ENCODE measurements at regions of chr4 and their contacts with region 1.

Region 1: DNA sequence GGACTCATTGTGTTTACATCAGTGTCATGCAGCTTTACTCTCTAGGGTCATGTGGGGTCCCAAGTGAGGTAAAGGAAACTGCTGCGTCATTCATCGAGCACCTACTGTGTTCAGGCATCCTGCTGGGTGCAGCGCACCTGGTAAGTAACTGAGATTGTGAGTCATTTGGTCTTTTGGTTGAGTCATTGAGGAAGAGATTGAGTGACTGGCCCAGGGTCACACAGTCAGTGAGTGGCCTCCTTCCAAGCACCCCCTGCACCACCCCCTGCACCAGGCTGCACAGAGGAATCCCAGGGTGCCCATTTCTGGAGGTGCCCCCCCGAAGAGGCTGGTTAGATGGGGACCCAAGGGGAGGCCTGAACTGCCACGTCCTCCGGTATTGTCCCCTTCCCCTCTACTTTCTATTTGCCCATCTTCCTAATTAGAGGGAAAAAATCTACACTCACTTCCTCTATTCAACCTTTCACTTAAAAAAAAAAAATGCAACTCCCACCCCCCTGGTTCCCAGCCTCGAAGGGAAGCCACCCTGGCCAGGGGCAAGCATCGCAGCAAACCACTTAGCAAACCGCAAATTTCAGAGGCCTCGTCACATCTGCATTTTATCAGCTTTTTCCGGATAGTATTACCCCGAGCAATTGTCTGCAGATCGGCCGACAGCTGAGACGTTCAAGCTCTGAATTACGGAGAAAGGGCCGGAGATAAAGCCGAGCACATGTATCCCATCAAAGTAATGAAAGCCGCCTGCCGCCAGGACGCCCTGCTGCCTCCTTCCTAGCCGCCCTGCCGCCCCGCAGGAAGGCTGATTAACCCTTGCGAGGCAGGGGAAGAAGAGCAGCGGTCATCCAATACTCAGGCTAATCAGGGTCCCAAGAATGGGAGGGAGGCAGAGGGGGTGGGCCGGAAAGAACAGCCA is 96.3 kb upstream of the MSX1 start:
- DNase-seq: peak in 1 of 2 experiments; percentile 63
- H3K4me3 ChIP-seq: peak overlapping the region in 1 of 4 experiments; percentile 17; a peak in 3 of 8 replicates
- H3K27ac ChIP-seq: no peak overlapping the region
- H3K4me1 ChIP-seq: peaks cover 3 to 27% (median 20%) of the 10 kb centered on the region in 4 experiments
- H3K27me3 ChIP-seq: peaks cover 0 to 26% (median 12%) of the 10 kb centered on the region in 4 experiments; a peak in 5 of 7 replicates
- CTCF ChIP-seq: 0 out of 4 replicates have a peak, but pooled peaks of 1 of the 3 experiments have one; percentile 4
- EP300 ChIP-seq: no peak
- POLR2A ChIP-seq: no peak
- RAD21 ChIP-seq: no peak

Region 2: DNA sequence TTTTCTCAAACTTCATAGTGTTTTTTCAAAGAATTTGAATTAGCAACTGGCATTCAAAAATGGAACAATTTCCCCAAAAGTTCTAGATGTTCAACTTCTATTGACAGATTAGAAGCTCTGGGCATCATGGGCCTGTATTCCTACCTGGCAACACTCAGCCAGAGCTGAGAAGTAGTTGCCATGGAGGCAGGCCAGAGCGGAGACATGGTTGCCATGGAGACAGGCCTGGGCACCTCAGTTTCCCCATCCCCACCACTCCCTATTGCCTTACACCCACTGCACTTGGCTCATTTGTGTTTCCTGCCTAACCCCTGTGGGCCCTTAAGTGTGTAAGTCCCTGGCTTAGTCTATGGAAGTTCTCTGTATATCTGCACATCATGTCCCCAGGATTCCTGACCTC is 20.0 kb before region 1 on chr4:
- CTCF ChIA-PET with region 1: interaction called, 10 read pairs
- POLR2A ChIA-PET with region 1: no interaction called
- DNase-seq: no peak
- H3K4me3 ChIP-seq: no peak overlapping the region
- H3K27ac ChIP-seq: no peak overlapping the region
- H3K4me1 ChIP-seq: no peaks in the 10 kb centered on the region
- H3K27me3 ChIP-seq: no peaks in the 10 kb centered on the region; a peak in 1 of 7 replicates
- CTCF ChIP-seq: no peak
- EP300 ChIP-seq: no peak
- POLR2A ChIP-seq: no peak
- RAD21 ChIP-seq: no peak

Region 3: GRCh38 chr4:4752576-4753401 is 10.4 kb before region 1 on chr4:
- CTCF ChIA-PET with region 1: interaction called, 25 read pairs
- POLR2A ChIA-PET with region 1: interaction called, 3 read pairs
- DNase-seq: no peak
- H3K4me3 ChIP-seq: no peak overlapping the region
- H3K27ac ChIP-seq: no peak overlapping the region
- H3K4me1 ChIP-seq: peaks cover 0 to 5% (median 0%) of the 10 kb centered on the region in 4 experiments; a peak in 1 of 7 replicates
- H3K27me3 ChIP-seq: peaks cover 0 to 4% (median 0%) of the 10 kb centered on the region in 4 experiments; a peak in 1 of 7 replicates
- CTCF ChIP-seq: no peak
- EP300 ChIP-seq: no peak
- POLR2A ChIP-seq: no peak
- RAD21 ChIP-seq: no peak

Region 4: DNA sequence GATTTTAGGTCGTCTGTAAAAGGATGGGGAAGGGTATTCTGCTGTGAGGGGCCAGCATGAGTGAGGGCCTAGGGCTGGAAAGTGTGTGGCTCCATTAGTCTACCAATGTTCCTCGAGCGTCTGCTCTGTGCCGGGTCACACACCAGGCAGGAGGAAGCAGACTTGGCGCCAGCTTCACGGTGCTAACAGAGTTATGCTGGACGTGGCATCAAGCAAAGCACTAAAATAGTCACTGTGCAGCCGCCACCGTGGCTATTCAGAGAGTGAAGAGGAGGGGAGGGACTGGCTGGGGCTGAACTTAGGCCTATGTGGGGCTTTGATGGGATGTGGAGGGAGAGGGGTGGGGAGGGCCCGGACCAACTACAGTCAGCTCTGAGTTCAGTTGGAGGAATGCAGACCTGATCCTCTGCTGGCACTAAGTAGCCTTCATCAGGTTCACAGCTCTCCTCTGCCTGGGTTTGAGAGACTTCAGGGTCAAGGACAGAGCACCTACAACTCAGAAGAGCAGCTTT is 12.4 kb after region 1 on chr4:
- CTCF ChIA-PET with region 1: interaction called, 16 read pairs
- POLR2A ChIA-PET with region 1: interaction called, 4 read pairs
- DNase-seq: no peak
- H3K4me3 ChIP-seq: no peak overlapping the region
- H3K27ac ChIP-seq: no peak overlapping the region
- H3K4me1 ChIP-seq: no peaks in the 10 kb centered on the region
- H3K27me3 ChIP-seq: peaks cover 0 to 2% (median 0%) of the 10 kb centered on the region in 4 experiments; a peak in 1 of 7 replicates
- CTCF ChIP-seq: no peak
- EP300 ChIP-seq: no peak
- POLR2A ChIP-seq: no peak
- RAD21 ChIP-seq: no peak

Region 5: GRCh38 chr4:4901877-4902276 is 138.7 kb after region 1 on chr4:
- CTCF ChIA-PET with region 1: no interaction called
- POLR2A ChIA-PET with region 1: no interaction called
- DNase-seq: no peak
- H3K4me3 ChIP-seq: no peak overlapping the region
- H3K27ac ChIP-seq: no peak overlapping the region
- H3K4me1 ChIP-seq: no peaks in the 10 kb centered on the region
- H3K27me3 ChIP-seq: peaks cover 0 to 6% (median 2%) of the 10 kb centered on the region in 4 experiments; a peak in 4 of 7 replicates
- CTCF ChIP-seq: peak; percentile 58 to 63 (median 62)
- EP300 ChIP-seq: no peak
- POLR2A ChIP-seq: no peak
- RAD21 ChIP-seq: peak; percentile 52 to 64

Region 6: GRCh38 chr4:5050520-5051277 is 287.5 kb after region 1 on chr4:
- CTCF ChIA-PET with region 1: no interaction called
- POLR2A ChIA-PET with region 1: no interaction called
- DNase-seq: peak; percentile 53 to 82
- H3K4me3 ChIP-seq: peak overlapping the region; percentile 29 to 70 (median 58)
- H3K27ac ChIP-seq: no peak overlapping the region
- H3K4me1 ChIP-seq: peaks cover 0 to 7% (median 5%) of the 10 kb centered on the region in 4 experiments; a peak in 5 of 7 replicates
- H3K27me3 ChIP-seq: peaks cover 15 to 35% (median 24%) of the 10 kb centered on the region in 4 experiments
- CTCF ChIP-seq: peak; percentile 78 to 90 (median 85)
- EP300 ChIP-seq: no peak
- POLR2A ChIP-seq: no peak
- RAD21 ChIP-seq: peak; percentile 95 to 97